ENCODE measurements at regions of chr17 and their contacts with region 1.

Region 1: GRCh38 chr17:64653325-64653984 is 8.7 kb downstream of the SMURF2 start:
- DNase-seq: no peak
- H3K4me3 ChIP-seq: no peak overlapping the region
- H3K4me3 Mint-ChIP-seq: peak overlapping the region in 1 of 8 donors; percentile 25
- H3K27ac ChIP-seq: no peak overlapping the region
- H3K27ac Mint-ChIP-seq: no peak overlapping the region
- H3K4me1 ChIP-seq: peaks cover 31% of the 10 kb centered on the region
- H3K4me1 Mint-ChIP-seq: peaks cover 25 to 56% (median 38%) of the 10 kb centered on the region in 4 donors
- H3K27me3 ChIP-seq: no peaks in the 10 kb centered on the region
- H3K27me3 Mint-ChIP-seq: no peaks in the 10 kb centered on the region

Region 2: DNA sequence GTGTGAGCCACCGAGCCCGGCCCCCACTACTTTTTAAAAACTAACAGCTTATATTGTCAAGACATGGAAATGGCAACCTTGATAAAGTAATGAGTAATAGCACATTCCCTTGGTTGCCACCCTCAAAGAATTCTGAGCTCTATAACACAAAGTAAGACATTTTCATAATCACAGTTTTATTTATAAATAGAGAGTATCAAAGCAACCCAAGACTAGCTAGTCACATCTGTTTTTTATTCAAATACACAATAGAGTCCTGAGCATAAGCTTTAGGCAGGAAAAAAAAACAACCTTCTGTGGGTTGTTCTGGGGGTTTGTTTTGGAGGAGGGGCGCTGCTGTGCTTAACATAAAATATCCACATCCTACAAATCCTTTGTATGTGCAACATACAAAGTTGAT is 78.0 kb before region 1 on chr17:
- CTCF ChIA-PET with region 1: interaction called, 10 read pairs
- POLR2A ChIA-PET with region 1: no interaction called
- intact Hi-C with region 1: no loop called
- DNase-seq: no peak
- H3K4me3 ChIP-seq: no peak overlapping the region
- H3K4me3 Mint-ChIP-seq: no peak overlapping the region
- H3K27ac ChIP-seq: no peak overlapping the region
- H3K27ac Mint-ChIP-seq: no peak overlapping the region
- H3K4me1 ChIP-seq: peaks cover 6% of the 10 kb centered on the region
- H3K4me1 Mint-ChIP-seq: peaks cover 9 to 18% (median 11%) of the 10 kb centered on the region in 4 donors
- H3K27me3 ChIP-seq: no peaks in the 10 kb centered on the region
- H3K27me3 Mint-ChIP-seq: no peaks in the 10 kb centered on the region

Measured in CD4-positive, alpha-beta memory T cell (primary cell).